ENCODE measurements at regions of chr1 and their contacts with region 1.

Region 1: DNA sequence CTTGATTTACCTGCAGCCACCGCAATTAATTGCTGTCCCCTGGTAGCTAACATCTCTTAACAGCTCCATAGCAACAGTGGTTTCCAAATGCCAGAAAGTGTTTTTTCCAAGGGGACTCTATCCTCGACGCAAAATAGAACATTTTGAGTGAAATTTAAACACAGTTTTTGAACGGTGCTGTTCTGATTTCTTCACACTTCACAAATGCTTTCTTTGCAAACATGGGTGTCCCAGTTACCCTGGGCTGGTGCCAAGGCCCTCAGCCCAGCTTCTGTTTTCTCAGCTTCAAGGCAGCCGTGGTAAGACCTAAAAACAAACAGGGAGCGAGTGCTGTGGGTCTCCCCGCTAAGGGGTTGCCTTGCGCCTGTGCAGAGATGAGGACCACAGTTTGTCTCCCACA is 147.3 kb upstream of the VAMP3 start:
- H3K4me3 ChIP-seq: no peak overlapping the region
- H3K27ac ChIP-seq: no peak overlapping the region
- H3K4me1 ChIP-seq: no peaks in the 10 kb centered on the region
- CTCF ChIP-seq: no peak

Region 2: DNA sequence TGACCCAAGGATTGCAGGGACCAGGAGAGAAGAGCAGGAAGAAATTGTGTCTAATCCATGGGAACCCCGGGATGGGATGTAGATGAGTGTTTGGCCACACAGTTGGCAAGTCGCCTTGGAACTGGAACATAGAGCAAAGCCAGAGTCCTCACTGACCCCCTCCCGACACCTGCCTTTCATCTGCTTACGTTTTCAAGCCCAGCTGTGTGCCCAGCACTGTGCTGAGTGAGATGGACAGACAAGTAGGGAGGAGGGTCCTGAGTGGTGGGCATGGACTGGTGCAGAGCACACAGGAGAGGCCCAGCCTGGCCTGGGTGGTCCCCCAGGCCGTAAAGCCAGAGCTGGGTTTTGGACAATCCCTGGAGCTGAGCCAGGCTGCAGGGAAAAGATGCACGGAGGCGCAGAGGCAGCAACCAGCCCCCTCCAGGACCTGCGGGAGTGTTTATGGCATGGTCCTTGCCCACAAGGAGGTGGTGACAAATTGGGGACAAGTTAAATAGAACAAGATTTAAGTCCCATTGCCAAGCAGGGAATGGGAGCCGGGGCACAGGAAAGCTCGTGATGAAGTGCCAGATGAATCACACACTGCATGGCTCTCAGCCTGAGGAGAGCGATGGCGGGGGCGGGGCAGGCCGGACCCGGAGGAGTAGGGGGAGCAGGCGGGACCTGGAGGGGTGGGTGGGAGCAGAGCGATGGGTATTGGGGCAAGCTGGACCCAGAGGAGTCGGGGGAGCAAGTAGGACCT is 10.6 kb before region 1 on chr1:
- CTCF ChIA-PET with region 1: no interaction called
- POLR2A ChIA-PET with region 1: no interaction called
- H3K4me3 ChIP-seq: no peak overlapping the region
- H3K27ac ChIP-seq: no peak overlapping the region
- H3K4me1 ChIP-seq: no peaks in the 10 kb centered on the region
- CTCF ChIP-seq: no peak

Region 3: GRCh38 chr1:7634546-7635240 is 10.9 kb after region 1 on chr1:
- CTCF ChIA-PET with region 1: no interaction called
- POLR2A ChIA-PET with region 1: no interaction called
- H3K4me3 ChIP-seq: no peak overlapping the region
- H3K27ac ChIP-seq: no peak overlapping the region
- H3K4me1 ChIP-seq: no peaks in the 10 kb centered on the region
- CTCF ChIP-seq: no peak

Region 4: DNA sequence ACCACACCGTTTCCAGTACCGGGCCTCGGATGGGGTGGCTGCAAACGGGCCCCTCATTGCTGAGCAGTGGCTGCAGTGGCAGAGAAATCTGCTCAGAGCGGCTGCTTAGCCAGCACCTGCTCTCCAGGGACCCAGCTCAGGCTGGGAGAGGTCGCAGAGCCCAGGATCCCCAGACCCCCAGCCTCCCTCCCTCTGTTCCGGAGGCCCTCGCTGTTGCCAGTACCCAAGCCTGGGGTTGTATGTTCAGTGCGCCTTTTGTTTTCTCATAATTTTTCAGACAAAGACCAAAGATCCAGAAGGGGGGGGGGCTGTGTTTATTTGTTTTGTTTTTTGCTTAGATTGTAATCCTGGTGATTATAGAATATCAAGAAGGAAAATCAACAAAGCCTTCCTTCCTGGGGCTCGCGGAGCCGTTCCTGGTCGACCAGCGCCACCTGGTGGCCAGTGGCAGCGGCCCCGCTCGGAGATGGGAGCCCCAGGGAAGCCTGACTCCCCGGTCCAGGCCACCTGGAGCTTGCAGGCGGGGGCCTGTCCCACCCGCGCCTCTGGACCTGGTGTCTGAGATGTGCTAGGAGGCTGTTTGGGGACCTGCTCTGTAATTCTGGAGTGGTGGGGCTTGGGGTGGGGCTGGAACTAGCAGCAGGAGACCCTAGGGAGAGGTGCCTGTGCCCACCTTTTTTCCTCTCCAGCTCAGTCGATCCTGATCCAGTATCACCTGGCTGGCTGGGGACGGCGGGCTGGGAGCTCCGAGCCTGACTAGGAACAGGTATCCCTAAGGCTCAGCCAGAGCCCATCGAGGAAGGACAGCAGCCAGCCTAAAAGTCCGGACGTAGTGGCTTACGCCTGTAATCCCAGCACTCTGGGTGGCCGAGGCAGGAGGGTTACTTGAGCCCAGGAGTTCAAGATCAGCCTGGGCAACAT is 23.4 kb after region 1 on chr1:
- CTCF ChIA-PET with region 1: interaction called, 12 read pairs
- POLR2A ChIA-PET with region 1: no interaction called
- H3K4me3 ChIP-seq: no peak overlapping the region
- H3K27ac ChIP-seq: no peak overlapping the region
- H3K4me1 ChIP-seq: no peaks in the 10 kb centered on the region
- CTCF ChIP-seq: peak; percentile 56

Measured in HEK293 (cell line).